ENCODE measurements at regions of chr16 and their contacts with region 1.

Region 1: DNA sequence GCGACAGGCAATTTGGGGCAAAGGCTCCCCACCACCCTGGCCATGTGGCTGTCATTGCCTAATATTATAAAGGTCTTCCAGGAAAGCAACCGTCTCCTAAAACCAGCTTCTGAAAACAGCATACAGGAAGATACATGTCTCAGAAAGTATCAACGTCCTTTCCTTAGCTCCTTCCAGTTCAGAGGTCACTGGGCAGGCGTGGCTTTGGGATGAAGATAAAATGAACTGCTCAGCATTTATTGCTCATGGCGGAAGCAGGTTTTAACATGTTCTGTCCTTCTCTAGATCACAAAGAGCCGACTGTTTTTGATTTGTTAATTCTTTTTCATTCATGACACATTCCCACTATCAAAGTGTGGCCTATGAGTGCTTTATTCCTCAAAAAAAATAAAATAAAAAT is 8.0 kb downstream of the CFAP20 start:
- DNase-seq: no peak
- H3K4me3 Mint-ChIP-seq: no peak overlapping the region
- H3K27ac Mint-ChIP-seq: no peak overlapping the region
- H3K4me1 Mint-ChIP-seq: peaks cover 33% of the 10 kb centered on the region
- H3K27me3 Mint-ChIP-seq: no peaks in the 10 kb centered on the region

Region 2: DNA sequence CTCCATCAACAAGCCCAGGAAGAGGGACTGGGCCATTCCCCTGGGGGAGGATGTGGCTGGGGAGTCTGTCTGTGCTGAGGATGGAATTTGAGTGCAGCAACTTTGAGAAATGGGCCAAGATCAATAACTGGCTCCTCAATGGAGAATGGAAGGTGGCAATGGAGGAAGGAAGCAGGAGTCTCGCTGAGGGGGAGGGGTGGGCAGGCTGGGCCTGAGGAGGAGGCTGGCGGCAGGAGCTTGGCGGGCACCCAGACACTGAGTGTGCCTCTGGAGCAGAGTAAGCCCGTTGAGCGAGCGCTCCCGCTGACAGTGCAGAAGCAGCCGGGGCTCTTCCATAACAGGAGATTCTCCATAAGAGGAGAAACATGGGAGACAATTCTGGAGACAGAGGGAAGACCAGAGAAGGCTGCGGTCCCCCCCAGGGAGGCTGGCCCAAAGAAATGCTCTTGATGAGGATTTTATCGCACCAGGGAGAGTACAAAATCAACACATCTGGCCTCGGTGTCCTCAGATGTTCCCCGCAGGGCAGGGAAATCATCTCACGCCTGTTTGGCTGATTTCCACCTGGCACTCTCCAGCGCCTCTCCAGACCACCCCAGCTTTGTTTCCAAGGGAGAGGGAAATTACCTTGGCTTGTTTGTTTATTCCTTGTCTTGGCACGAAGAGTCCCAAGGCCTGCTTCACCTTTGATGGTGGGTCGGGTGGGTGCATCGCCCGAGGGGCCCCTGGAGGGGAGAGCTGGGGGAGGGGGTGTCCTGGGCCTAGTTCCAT is 98.3 kb before region 1 on chr16:
- CTCF ChIA-PET with region 1: interaction called, 14 read pairs
- DNase-seq: no peak
- H3K4me3 Mint-ChIP-seq: no peak overlapping the region
- H3K27ac Mint-ChIP-seq: no peak overlapping the region
- H3K4me1 Mint-ChIP-seq: peaks cover 19% of the 10 kb centered on the region
- H3K27me3 Mint-ChIP-seq: peaks cover 38% of the 10 kb centered on the region

Region 3: DNA sequence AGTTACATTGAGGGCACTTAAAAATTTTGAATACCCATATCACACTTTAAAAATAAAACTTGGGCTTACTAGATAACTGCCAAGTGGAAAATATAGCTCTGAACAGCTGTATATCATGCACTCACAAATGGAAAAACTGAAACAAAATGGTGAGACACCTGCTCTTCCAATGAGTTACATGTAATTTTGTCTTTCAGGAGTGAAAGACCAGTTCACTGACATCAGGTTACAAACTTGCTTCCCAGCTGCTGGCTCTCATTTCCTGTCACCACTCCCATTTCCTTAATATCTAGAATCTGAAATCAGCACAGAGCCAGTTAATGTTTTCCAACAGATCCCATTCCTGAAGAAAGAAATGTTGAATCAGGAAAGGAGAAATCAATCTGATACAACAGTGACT is 66.0 kb after region 1 on chr16:
- CTCF ChIA-PET with region 1: no interaction called
- DNase-seq: no peak
- H3K4me3 Mint-ChIP-seq: no peak overlapping the region
- H3K27ac Mint-ChIP-seq: no peak overlapping the region
- H3K4me1 Mint-ChIP-seq: peaks cover 21% of the 10 kb centered on the region
- H3K27me3 Mint-ChIP-seq: no peaks in the 10 kb centered on the region